ENCODE measurements at regions of chr13 and their contacts with region 1.

Region 1: GRCh38 chr13:97810152-97810551 is 143.3 kb upstream of the IPO5 start:
- DNase-seq: peak; percentile 51
- H3K4me3 ChIP-seq: no peak overlapping the region
- H3K27ac ChIP-seq: no peak overlapping the region
- H3K4me1 ChIP-seq: 0 out of 2 replicates have a peak, but pooled peaks cover 8% of the 10 kb centered on the region
- H3K27me3 ChIP-seq: peaks cover 9% of the 10 kb centered on the region

Region 2: GRCh38 chr13:97018029-97018831 is 791.9 kb before region 1 on chr13:
- in situ Hi-C with region 1: loop called (anchors 25 kb)
- DNase-seq: peak; percentile 65
- H3K4me3 ChIP-seq: no peak overlapping the region
- H3K27ac ChIP-seq: no peak overlapping the region
- H3K4me1 ChIP-seq: no peaks in the 10 kb centered on the region
- H3K27me3 ChIP-seq: no peaks in the 10 kb centered on the region

Region 3: GRCh38 chr13:97359181-97360057 is 450.7 kb before region 1 on chr13:
- in situ Hi-C with region 1: loop called (anchors 25 kb)
- DNase-seq: peak; percentile 90
- H3K4me3 ChIP-seq: no peak overlapping the region
- H3K27ac ChIP-seq: no peak overlapping the region
- H3K4me1 ChIP-seq: no peaks in the 10 kb centered on the region
- H3K27me3 ChIP-seq: no peaks in the 10 kb centered on the region

Region 4: GRCh38 chr13:97492257-97492656 is 317.9 kb before region 1 on chr13:
- in situ Hi-C with region 1: no loop called
- DNase-seq: no peak
- H3K4me3 ChIP-seq: no peak overlapping the region
- H3K27ac ChIP-seq: no peak overlapping the region
- H3K4me1 ChIP-seq: no peaks in the 10 kb centered on the region
- H3K27me3 ChIP-seq: no peaks in the 10 kb centered on the region

Region 5: DNA sequence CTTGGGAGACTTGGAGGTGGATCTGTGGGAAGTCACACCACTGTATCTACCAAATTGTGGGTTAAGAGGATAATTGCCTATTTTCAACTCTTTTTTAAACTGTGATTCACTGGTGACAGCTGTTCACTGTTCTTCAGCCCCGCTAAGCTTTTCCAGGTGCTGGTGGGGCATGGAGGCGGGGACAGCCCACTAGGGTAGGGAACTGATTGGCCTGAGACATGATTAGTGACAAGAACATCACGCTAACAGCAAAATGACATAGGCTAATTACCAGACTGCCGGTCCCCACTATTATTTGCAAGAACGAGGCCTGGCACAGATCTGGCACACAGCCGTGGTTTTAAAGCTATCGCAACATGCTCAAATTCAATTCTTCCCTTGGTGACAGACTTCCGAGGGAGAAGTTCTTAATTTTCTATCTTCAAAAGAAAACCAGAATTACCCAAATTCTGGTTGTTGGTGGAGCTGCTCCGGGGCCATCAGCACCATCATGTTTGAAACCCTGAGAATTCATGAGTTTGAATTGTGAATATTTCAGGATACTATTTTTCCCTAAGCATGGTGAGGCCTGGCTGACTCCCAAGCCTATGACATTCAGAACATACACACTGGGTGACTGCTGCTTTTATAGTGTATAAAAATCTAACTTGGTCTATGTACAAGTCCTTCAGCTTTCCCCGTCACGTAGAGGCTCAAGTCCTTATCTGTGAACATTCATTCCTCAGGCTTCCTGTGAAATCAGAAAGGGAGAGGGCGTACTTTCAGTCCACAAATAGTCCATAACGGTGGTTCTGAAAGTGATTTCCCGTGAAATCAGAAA is 1149.8 kb after region 1 on chr13:
- in situ Hi-C with region 1: no loop called
- DNase-seq: no peak
- H3K4me3 ChIP-seq: no peak overlapping the region
- H3K27ac ChIP-seq: no peak overlapping the region
- H3K4me1 ChIP-seq: no peaks in the 10 kb centered on the region
- H3K27me3 ChIP-seq: no peaks in the 10 kb centered on the region

Measured in GM23248 (cell line).